ENCODE measurements at regions of chrX and their contacts with region 1.

Region 1: DNA sequence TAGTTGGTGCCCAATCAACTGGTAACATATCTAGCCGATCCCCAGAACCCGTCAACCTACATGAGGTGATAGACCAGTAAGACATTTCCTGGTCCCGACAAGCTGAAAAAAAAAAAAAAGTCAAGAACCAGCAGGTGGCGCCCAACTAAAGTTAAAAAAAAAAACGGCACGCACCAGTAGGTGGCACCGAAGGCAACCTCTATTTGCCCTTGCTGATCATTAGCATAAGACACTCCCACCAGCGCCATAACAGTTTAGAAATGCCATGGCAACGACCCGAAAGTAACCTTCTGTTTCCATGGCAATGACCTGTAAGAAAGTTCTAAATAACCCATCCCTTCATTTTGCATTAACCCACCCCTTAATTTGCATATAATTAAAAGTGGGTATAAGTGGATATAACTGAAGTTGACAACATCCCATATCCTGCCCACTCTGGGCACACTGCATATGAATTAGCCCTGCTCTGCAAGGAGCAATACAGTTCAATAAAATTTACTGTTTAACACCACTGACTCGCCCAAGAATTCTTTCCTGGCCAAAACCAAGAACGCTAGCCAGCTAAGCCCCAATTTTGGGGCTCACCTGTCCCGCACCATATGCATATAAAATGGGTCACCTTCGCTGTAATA is 83.9 kb upstream of the SPANXB1 start:
- DNase-seq: peak; percentile 7
- ATAC-seq: peak; percentile 96
- H3K4me3 ChIP-seq: no peak overlapping the region
- H3K27ac ChIP-seq: no peak overlapping the region
- H3K4me1 ChIP-seq: no peaks in the 10 kb centered on the region
- H3K27me3 ChIP-seq: no peaks in the 10 kb centered on the region
- CTCF ChIP-seq: peak; percentile 47 to 65 (median 60); a peak in 5 of 6 replicates
- EP300 ChIP-seq: no peak
- POLR2A ChIP-seq: no peak
- RAD21 ChIP-seq: peak; percentile 47

Region 2: GRCh38 chrX:140860718-140861117 is 57.8 kb before region 1 on chrX:
- CTCF ChIA-PET with region 1: no interaction called
- POLR2A ChIA-PET with region 1: no interaction called
- RAD21 ChIA-PET with region 1: no interaction called
- SMC1A ChIA-PET with region 1: no interaction called
- in situ Hi-C with region 1: no loop called
- intact Hi-C with region 1: no loop called
- DNase-seq: no peak
- ATAC-seq: no peak
- H3K4me3 ChIP-seq: no peak overlapping the region
- H3K27ac ChIP-seq: no peak overlapping the region
- H3K4me1 ChIP-seq: no peaks in the 10 kb centered on the region
- H3K27me3 ChIP-seq: no peaks in the 10 kb centered on the region
- CTCF ChIP-seq: no peak
- EP300 ChIP-seq: no peak
- POLR2A ChIP-seq: no peak
- RAD21 ChIP-seq: no peak

Region 3: GRCh38 chrX:140944710-140945109 is 26.2 kb after region 1 on chrX:
- CTCF ChIA-PET with region 1: no interaction called
- POLR2A ChIA-PET with region 1: no interaction called
- RAD21 ChIA-PET with region 1: no interaction called
- SMC1A ChIA-PET with region 1: no interaction called
- in situ Hi-C with region 1: no loop called
- intact Hi-C with region 1: loop called (anchors 2 kb)
- DNase-seq: no peak
- ATAC-seq: no peak
- H3K4me3 ChIP-seq: no peak overlapping the region
- H3K27ac ChIP-seq: no peak overlapping the region
- H3K4me1 ChIP-seq: no peaks in the 10 kb centered on the region
- H3K27me3 ChIP-seq: no peaks in the 10 kb centered on the region
- CTCF ChIP-seq: no peak
- EP300 ChIP-seq: no peak
- POLR2A ChIP-seq: no peak
- RAD21 ChIP-seq: no peak

Region 4: GRCh38 chrX:141258080-141258479 is 339.6 kb after region 1 on chrX:
- CTCF ChIA-PET with region 1: no interaction called
- POLR2A ChIA-PET with region 1: no interaction called
- RAD21 ChIA-PET with region 1: no interaction called
- SMC1A ChIA-PET with region 1: no interaction called
- in situ Hi-C with region 1: no loop called
- intact Hi-C with region 1: no loop called
- DNase-seq: no peak
- ATAC-seq: no peak
- H3K4me3 ChIP-seq: no peak overlapping the region
- H3K27ac ChIP-seq: no peak overlapping the region
- H3K4me1 ChIP-seq: no peaks in the 10 kb centered on the region
- H3K27me3 ChIP-seq: no peaks in the 10 kb centered on the region
- CTCF ChIP-seq: no peak
- EP300 ChIP-seq: no peak
- POLR2A ChIP-seq: no peak
- RAD21 ChIP-seq: no peak